Right cardiac atrium (tissue), 5 donors: ENCODE measurements at regions of chr2 and their contacts with region 1.

Region 1: DNA sequence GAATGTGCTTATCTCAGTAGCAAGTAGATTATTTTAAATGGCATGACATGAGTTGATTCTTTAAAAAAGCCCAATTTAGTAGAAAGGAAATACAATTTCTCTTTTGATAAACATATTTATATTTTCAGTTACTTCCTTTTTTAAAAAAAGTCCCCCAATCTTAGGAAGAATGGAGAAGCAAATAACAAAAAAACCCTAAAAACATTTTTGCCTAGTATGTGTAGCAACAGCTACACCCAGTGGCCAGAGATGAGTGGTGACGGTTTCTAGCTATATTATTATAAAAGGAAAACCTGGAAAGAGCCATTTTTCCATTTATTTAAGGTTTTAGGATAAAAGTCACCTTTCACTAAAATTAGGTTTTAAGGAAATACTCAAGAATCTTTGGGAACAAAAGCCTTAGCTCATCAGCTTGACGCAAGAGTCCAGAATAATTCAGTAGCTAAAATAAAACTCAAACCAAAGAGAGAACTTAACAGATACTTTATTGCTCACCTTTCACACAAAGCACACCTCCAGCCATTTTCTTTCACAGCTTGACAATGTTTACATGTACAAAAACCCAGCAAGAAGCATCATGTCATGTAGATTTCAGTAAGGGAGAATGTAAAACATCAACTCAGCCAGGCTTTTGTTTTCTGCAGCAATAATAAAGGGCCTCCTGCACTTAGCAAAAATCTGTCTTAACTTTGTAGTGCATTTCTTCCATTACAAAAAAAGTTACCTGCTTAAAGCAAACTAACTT is 15.7 kb downstream of the FAM98A start:
- DNase-seq: peak in 1 of 3 donors; percentile 66
- ATAC-seq: no peak
- H3K4me3 ChIP-seq: no peak overlapping the region
- H3K27ac ChIP-seq: no peak overlapping the region
- H3K4me1 ChIP-seq: peaks cover 2% of the 10 kb centered on the region
- H3K27me3 ChIP-seq: no peaks in the 10 kb centered on the region

Region 2: GRCh38 chr2:33372940-33373553 is 210.3 kb before region 1 on chr2:
- intact Hi-C with region 1: no loop called
- DNase-seq: no peak
- ATAC-seq: no peak
- H3K4me3 ChIP-seq: no peak overlapping the region
- H3K27ac ChIP-seq: no peak overlapping the region
- H3K4me1 ChIP-seq: no peaks in the 10 kb centered on the region
- H3K27me3 ChIP-seq: no peaks in the 10 kb centered on the region

Region 3: DNA sequence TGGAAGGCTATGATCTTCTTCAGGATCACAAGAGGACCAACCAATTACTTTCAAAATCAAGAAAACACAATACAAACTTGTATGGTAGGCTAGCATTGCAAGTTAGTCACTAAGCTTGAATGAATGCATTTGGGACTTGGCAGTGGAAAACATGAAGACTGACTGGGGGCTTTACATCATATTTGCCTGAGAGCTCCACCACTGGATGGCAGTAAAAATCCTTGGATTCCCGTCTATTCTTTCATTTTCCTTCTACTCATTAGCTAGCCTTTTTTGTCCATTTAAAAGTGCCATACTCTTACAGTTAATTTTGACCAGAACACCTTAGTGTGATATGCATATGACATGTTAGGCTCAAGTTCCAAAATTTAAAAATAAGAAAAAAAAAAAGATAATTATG is 170.4 kb before region 1 on chr2:
- intact Hi-C with region 1: loop called in 2 of 4 experiments (anchors 10 kb)
- DNase-seq: no peak
- ATAC-seq: peak; percentile 38 to 49
- H3K4me3 ChIP-seq: no peak overlapping the region
- H3K27ac ChIP-seq: no peak overlapping the region
- H3K4me1 ChIP-seq: no peaks in the 10 kb centered on the region
- H3K27me3 ChIP-seq: no peaks in the 10 kb centered on the region

Region 4: GRCh38 chr2:33475224-33476130 is 107.9 kb before region 1 on chr2:
- intact Hi-C with region 1: loop called in 1 of 4 experiments (anchors 5 kb)
- DNase-seq: peak; percentile 67 to 88 (median 83)
- ATAC-seq: peak; percentile 61 to 66
- H3K4me3 ChIP-seq: peak overlapping the region; percentile 70
- H3K27ac ChIP-seq: peak overlapping the region; percentile 97
- H3K4me1 ChIP-seq: peaks cover 5% of the 10 kb centered on the region
- H3K27me3 ChIP-seq: no peaks in the 10 kb centered on the region